ENCODE measurements at regions of chr19 and their contacts with region 1.

Region 1: GRCh38 chr19:19900729-19901444 is at the start of gene ZNF93:
- DNase-seq: peak; percentile 80 to 96 (median 85)
- ATAC-seq: peak; percentile 97
- H3K4me3 ChIP-seq: peak within 1 kb of the TSS; percentile 96
- H3K4me3 Mint-ChIP-seq: peak within 1 kb of the TSS; percentile 94
- H3K27ac ChIP-seq: peak within 1 kb of the TSS; percentile 70
- H3K27ac Mint-ChIP-seq: peak within 1 kb of the TSS; percentile 82
- H3K4me1 ChIP-seq: peaks cover 20% of the 10 kb centered on the region
- H3K4me1 Mint-ChIP-seq: peaks cover 47% of the 10 kb centered on the region
- H3K27me3 ChIP-seq: no peaks in the 10 kb centered on the region
- H3K27me3 Mint-ChIP-seq: no peaks in the 10 kb centered on the region
- CTCF ChIP-seq: no peak
- total RNA-seq, gene ZNF93: 4.4 to 5.4 TPM

Region 2: DNA sequence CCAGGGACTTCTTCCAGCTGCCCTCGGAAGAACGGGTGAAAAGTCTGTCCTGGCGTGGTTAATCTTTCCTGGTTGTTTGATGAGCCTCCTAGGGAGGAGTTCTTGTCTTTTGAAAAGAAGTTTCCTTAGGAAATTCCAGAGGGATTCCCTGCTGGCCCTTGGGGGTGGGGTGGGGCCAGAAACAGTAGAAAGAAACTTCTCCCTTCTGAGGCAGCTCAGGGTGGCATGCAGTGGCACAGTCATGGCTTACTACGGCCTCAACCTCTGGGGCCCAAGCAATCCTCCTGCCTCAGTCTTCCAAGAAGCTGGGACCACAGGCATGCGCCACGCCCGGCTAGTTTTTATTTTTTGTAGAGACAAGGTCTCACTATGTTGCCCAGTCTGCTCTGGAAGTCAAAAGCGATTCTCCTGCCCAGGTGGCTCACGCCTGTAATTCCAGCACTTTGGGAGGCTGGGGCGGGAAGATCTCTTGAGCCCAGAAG is 230.8 kb before region 1 on chr19:
- CTCF ChIA-PET with region 1: no interaction called
- POLR2A ChIA-PET with region 1: interaction called, 44 read pairs
- intact Hi-C with region 1: loop called in 1 of 2 experiments (anchors 10 kb)
- DNase-seq: no peak
- ATAC-seq: no peak
- H3K4me3 ChIP-seq: peak overlapping the region; percentile 99
- H3K4me3 Mint-ChIP-seq: peak overlapping the region; percentile 96
- H3K27ac ChIP-seq: peak overlapping the region; percentile 29 to 59
- H3K27ac Mint-ChIP-seq: peak overlapping the region; percentile 95
- H3K4me1 ChIP-seq: peaks cover 66% of the 10 kb centered on the region
- H3K4me1 Mint-ChIP-seq: peaks cover 45% of the 10 kb centered on the region
- H3K27me3 ChIP-seq: no peaks in the 10 kb centered on the region
- H3K27me3 Mint-ChIP-seq: no peaks in the 10 kb centered on the region
- CTCF ChIP-seq: no peak

Region 3: DNA sequence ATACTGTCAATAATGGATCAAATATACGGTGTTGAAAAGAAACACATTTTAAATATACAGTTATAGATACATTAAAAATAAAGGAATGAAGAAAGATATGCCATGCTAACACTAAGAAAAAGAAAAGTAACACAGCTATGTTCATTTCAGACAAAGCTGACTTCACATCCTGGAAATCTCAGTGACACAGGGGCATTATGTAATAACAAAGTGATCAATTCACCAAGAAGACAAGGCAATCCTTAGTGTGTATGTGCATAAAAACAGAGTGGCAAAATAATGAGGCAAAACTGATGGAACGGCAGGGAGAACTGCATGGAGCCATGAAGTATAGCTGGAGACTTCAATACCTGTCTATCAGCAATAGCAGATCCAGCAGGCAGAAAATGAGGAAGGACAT is 181.1 kb before region 1 on chr19:
- CTCF ChIA-PET with region 1: no interaction called
- POLR2A ChIA-PET with region 1: no interaction called
- intact Hi-C with region 1: loop called in 1 of 2 experiments (anchors 10 kb)
- DNase-seq: peak in 1 of 14 experiments; percentile 28
- ATAC-seq: peak; percentile 44
- H3K4me3 ChIP-seq: no peak overlapping the region
- H3K4me3 Mint-ChIP-seq: peak overlapping the region; percentile 28
- H3K27ac ChIP-seq: no peak overlapping the region
- H3K27ac Mint-ChIP-seq: no peak overlapping the region
- H3K4me1 ChIP-seq: no peaks in the 10 kb centered on the region
- H3K4me1 Mint-ChIP-seq: peaks cover 4% of the 10 kb centered on the region
- H3K27me3 ChIP-seq: no peaks in the 10 kb centered on the region
- H3K27me3 Mint-ChIP-seq: no peaks in the 10 kb centered on the region
- CTCF ChIP-seq: no peak

Region 4: DNA sequence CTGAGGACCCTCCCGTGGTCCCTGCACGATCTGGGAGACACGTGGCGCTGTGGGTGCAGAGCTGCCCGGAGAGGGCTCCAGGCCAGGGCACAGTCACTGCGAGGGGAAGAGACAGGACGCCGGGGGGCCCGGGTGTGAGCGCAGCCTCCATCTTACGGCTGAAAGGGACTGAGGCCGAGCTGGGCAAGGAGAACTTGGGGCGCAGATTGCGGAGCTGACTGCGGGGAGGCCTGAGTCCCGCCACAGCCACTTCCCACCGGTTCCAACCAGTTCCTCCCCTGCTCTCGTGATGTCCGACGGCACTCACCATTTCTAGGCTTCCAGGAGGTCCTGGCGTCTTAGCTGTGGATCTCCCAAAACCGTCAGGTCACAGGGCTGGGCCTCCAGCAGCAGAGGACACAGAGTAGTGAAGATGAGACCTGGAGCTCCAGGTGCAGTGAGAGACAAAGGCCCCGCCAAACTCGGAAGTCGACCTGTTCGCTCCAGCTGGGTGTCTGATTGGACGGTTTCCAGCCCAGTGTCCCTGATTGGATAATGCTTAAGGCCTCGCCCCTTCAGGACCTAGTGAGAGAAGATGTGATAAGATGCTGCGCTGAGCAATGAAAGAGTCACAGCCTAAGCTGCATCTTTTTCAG is 40.0 kb before region 1 on chr19:
- CTCF ChIA-PET with region 1: no interaction called
- POLR2A ChIA-PET with region 1: interaction called, 81 read pairs
- intact Hi-C with region 1: loop called (anchors 1 to 2 kb)
- DNase-seq: peak in 11 of 14 experiments; percentile 2 to 87 (median 52)
- ATAC-seq: peak; percentile 67
- H3K4me3 ChIP-seq: peak overlapping the region; percentile 25
- H3K4me3 Mint-ChIP-seq: peak overlapping the region; percentile 68
- H3K27ac ChIP-seq: no peak overlapping the region
- H3K27ac Mint-ChIP-seq: peak overlapping the region; percentile 0
- H3K4me1 ChIP-seq: peaks cover 12% of the 10 kb centered on the region
- H3K4me1 Mint-ChIP-seq: peaks cover 8% of the 10 kb centered on the region
- H3K27me3 ChIP-seq: no peaks in the 10 kb centered on the region
- H3K27me3 Mint-ChIP-seq: no peaks in the 10 kb centered on the region
- CTCF ChIP-seq: no peak

Region 5: GRCh38 chr19:19865739-19866481 is 35.0 kb before region 1 on chr19 and contains the start of gene ZNF253:
- CTCF ChIA-PET with region 1: interaction called, 3 read pairs
- POLR2A ChIA-PET with region 1: interaction called, 81 read pairs
- intact Hi-C with region 1: loop called (anchors 1 to 2 kb)
- DNase-seq: peak; percentile 88 to 96 (median 94)
- ATAC-seq: peak; percentile 90
- H3K4me3 ChIP-seq: peak within 1 kb of the TSS; percentile 89
- H3K4me3 Mint-ChIP-seq: peak within 1 kb of the TSS; percentile 97
- H3K27ac ChIP-seq: peak within 1 kb of the TSS; percentile 86 to 88
- H3K27ac Mint-ChIP-seq: peak within 1 kb of the TSS; percentile 97
- H3K4me1 ChIP-seq: peaks cover 13% of the 10 kb centered on the region
- H3K4me1 Mint-ChIP-seq: peaks cover 41% of the 10 kb centered on the region
- H3K27me3 ChIP-seq: no peaks in the 10 kb centered on the region
- H3K27me3 Mint-ChIP-seq: no peaks in the 10 kb centered on the region
- CTCF ChIP-seq: no peak
- total RNA-seq, gene ZNF253: 4.9 to 5.2 TPM

Measured in CD4-positive, alpha-beta T cell (primary cell).